Gastrocnemius medialis (tissue), 4 donors: ENCODE measurements at regions of chr2 and their contacts with region 1.

Region 1: GRCh38 chr2:44244129-44244871 is 31.0 kb upstream of the SLC3A1 start:
- DNase-seq: peak; percentile 57 to 65
- ATAC-seq: peak; percentile 77 to 89
- H3K4me3 ChIP-seq: peak overlapping the region; percentile 16 to 48 (median 40)
- H3K27ac ChIP-seq: peak overlapping the region; percentile 36 to 83 (median 72)
- H3K4me1 ChIP-seq: peaks cover 12% of the 10 kb centered on the region in 2 donors
- H3K27me3 ChIP-seq: no peaks in the 10 kb centered on the region
- CTCF ChIP-seq: peak; percentile 43 to 76 (median 63)
- POLR2A ChIP-seq: no peak

Region 2: DNA sequence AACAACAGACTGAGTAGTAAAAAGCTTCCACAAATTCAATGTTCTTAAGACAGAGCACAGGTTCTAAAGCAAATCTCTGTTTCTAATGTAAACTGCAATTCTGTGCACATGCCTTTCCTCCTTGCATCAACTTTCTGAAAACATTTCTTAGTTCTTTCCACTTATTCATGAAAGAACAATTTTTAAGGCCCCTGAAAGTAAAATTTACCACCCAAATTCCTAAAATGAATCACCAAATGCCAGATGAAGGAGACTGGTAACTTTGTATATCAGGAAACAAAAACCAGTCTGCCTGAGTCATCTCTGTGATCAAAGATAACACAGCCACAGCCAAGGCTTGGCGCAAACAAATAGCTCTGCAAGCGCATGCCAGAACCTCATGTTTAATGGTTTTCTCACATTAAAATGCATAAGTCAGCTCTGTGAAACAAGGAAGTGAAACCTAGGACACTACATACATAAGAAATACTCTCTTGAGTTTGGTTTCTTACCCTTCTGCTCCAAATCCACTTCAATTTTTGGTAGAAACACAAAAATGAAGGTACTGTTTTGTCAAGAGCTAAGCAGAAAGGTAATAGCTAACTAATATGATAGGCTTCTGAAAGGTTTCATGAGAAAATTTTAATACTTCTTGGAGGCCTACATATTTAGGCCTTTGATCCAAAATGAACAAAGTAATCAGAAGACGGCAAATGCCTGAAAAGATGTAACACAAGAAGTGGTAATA is 817.8 kb before region 1 on chr2:
- in situ Hi-C with region 1: no loop called
- intact Hi-C with region 1: no loop called
- DNase-seq: peak; percentile 15 to 29
- ATAC-seq: peak; percentile 64
- H3K4me3 ChIP-seq: no peak overlapping the region
- H3K27ac ChIP-seq: peak overlapping the region in 3 of 4 donors; percentile 15 to 35 (median 26)
- H3K4me1 ChIP-seq: peaks cover 0 to 15% of the 10 kb centered on the region in 2 donors
- H3K27me3 ChIP-seq: no peaks in the 10 kb centered on the region
- CTCF ChIP-seq: no peak
- POLR2A ChIP-seq: no peak

Region 3: DNA sequence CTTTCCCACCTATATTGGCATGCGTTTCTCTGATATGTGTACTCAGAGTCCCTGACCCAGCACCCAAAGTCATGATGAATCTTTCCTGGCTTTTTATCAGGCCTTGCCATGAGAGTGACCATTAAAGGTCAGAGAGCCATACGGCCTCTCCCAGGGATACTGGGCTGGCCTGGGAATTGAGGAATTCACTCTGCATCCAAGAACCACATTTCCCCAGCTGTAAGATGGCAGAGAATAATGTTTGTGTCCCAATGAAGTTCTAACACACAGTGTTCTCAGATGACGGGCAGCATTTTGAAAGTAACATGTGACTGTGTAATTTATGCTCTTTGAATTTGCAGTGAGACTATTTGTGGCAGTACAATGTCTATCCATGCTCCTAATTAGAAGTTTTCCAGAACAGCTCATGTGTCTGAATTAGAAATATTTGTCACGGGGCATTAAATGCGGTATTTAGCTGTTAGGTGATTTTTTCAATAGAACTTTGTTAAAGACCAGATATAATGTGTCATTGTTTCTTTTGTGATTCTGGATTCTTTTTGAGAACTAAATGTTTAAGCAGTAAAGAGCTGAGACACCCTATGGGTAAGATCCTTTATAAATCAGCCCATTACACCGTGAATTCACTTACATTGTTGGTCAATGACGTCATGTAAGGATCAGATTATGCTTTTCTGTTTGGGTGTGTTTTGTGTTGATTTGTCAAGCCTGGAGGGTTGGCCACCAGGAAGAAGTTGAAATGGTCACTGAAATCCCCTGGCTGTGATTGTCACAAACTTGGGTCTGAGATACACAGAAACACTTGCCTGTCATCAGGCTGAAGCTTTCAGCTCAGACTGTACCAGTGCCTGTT is 23.7 kb after region 1 on chr2:
- in situ Hi-C with region 1: no loop called
- intact Hi-C with region 1: loop called (anchors 2 kb)
- DNase-seq: peak; percentile 31
- ATAC-seq: peak; percentile 98
- H3K4me3 ChIP-seq: no peak overlapping the region
- H3K27ac ChIP-seq: peak overlapping the region; percentile 65 to 87 (median 80)
- H3K4me1 ChIP-seq: peaks cover 15 to 16% of the 10 kb centered on the region in 2 donors
- H3K27me3 ChIP-seq: no peaks in the 10 kb centered on the region
- CTCF ChIP-seq: no peak
- POLR2A ChIP-seq: no peak

Region 4: GRCh38 chr2:44291281-44292248 is 47.3 kb after region 1 on chr2:
- in situ Hi-C with region 1: no loop called
- intact Hi-C with region 1: loop called (anchors 1 kb)
- DNase-seq: peak; percentile 27 to 38
- ATAC-seq: peak; percentile 91 to 93
- H3K4me3 ChIP-seq: peak overlapping the region in 3 of 4 donors; percentile 10 to 32 (median 29)
- H3K27ac ChIP-seq: no peak overlapping the region
- H3K4me1 ChIP-seq: peaks cover 7 to 10% of the 10 kb centered on the region in 2 donors
- H3K27me3 ChIP-seq: no peaks in the 10 kb centered on the region
- CTCF ChIP-seq: peak; percentile 48 to 68 (median 64)
- POLR2A ChIP-seq: no peak